ENCODE measurements at regions of chr18 and their contacts with region 1.

Region 1: DNA sequence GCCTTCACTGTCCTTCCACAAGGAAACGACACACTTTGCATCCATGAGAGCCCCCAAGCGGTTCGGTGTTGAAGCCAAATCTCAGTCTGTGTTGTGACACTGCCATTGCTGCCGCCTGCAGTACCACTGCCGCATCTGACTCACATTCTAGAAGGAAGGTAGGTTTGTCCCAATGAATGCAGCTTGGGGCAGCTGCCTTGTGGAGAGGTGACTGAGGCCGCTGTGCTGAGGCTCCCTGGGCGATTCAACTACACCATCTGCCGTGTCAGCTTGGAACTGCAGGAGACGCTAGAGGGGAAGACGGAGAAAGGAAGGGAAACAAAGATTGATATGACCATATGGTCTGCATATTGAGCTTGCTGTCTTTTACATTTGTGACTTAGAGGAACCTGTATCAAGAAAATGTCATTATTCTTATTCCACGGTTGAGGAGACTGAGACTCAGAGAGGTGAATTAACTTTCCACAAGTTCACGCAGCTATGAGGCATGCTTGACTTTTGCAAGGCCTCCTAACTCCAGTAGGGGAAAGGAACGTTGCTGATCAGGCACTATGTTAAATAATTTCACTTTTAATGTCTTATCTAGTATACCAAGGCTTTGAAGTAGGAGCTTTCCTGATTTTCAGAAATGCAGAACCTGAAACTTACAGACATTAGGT is 43.5 kb upstream of the LMAN1 start:
- DNase-seq: peak; percentile 66
- H3K4me3 ChIP-seq: no peak overlapping the region
- H3K27ac ChIP-seq: no peak overlapping the region
- H3K4me1 ChIP-seq: no peaks in the 10 kb centered on the region
- H3K27me3 ChIP-seq: no peaks in the 10 kb centered on the region
- CTCF ChIP-seq: peak; percentile 56 to 90 (median 86)
- POLR2A ChIP-seq: no peak

Region 2: DNA sequence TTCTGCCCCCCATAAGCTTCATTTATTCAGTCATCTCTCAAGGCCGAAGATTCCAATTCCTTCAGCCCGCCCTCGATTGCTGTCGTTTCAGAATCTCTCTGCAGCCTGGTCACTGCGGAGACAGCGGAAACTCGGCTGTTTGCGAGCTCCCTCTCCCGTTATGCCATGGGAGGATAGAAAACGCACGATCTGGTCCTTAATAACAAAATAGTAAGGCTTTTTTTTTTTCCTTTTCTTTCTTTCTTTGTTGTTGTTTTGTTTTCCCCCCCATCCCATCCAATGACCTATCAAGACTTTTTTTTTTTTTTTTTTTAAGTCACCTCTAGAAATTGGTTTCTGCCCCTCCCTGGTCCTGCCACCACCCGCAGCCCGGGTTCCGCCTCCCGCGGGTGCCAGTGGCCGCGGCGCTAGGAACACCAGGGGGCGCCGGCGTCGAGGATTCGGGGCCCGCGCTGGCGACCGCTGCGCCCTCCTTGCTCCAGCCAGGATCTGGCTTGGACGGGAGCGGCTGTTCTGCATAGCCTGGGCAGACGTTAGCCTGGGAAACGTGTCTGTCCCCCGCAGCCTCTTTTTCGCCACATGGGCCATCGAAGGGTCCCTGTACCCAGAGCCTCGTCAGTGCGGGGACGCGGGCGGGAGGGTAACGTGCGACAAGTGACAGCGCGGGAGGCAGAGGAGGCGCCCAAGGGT is 94.2 kb before region 1 on chr18:
- intact Hi-C with region 1: loop called (anchors 2 kb)
- DNase-seq: peak; percentile 55
- H3K4me3 ChIP-seq: peak overlapping the region in 1 of 2 donors; percentile 18
- H3K27ac ChIP-seq: no peak overlapping the region
- H3K4me1 ChIP-seq: no peaks in the 10 kb centered on the region
- H3K27me3 ChIP-seq: no peaks in the 10 kb centered on the region
- CTCF ChIP-seq: peak; percentile 47 to 80 (median 75)
- POLR2A ChIP-seq: no peak

Measured in prostate gland (tissue), 2 donors.